Activated CD4-positive, alpha-beta memory T cell treated with anti-CD3 and anti-CD28 coated beads for 36 hours (primary cell): ENCODE measurements at regions of chr1 and their contacts with region 1.

Region 1: DNA sequence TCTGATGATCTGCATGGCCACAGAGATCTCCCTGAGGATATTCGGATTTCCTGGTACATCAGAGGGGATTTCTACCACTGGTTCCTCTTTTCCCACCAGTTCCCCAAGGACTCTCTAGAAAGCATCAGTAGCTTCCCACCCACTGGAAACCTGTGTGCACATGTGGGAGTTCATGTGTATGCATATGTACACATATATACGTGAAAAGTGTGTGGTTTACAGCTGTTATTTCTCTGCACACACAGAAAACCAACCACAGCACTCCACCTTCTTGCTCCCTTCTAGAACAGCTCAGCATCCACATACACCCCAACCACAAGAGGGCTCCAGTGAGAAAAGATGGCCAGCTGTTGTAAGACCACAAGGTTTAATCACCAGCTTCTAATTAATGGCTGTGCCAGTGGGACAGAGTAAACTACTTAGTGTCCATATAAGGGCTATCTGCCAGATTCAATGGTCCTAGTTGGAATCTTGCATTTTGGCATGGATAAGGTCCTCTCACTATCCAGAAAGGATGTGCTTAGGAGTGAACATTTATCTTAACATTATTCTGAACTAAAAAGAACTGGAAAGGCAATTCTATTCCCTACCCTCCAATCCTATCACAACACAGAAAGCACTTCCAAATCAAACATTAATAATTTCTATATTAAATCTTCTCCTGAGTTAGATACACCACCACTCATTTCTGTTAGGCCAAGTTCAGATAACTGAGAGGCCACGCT is 24.1 kb downstream of the GPR3 start:
- DNase-seq: peak; percentile 70
- H3K4me3 Mint-ChIP-seq: no peak overlapping the region
- H3K27ac Mint-ChIP-seq: no peak overlapping the region
- H3K4me1 Mint-ChIP-seq: peaks cover 39% of the 10 kb centered on the region
- H3K27me3 Mint-ChIP-seq: no peaks in the 10 kb centered on the region

Region 2: DNA sequence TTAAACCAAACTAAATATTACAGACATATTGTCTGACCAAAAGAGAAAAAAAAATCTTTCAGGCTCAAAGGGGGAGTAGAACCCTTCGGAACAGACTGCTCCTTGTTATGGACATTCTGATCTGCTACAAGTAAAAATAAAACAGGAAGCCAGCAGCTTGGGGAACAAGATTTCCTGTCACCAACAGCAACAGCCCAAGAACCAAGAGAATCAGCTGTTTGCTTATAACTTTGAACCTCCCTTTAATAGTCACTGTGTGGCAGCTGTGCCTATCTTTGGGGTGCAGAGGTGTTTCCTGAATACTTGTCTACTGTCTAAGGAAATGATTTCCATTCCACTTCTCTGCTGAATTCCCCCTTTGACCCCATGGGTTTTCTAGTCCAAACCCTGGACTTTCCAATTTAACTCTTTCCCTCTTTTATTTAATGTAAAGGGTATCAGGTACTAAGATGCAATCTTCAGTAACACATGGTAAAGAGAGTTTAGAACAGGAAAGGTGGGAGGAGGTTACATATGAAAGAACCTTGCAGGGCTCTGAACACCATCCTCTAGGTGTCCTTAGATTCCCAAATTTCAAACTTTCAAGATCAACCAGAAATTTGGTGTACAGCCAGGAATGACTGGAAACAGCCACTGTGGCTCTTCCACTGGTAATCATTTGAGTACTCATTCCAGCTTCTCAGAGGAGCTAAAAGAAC is 14.5 kb after region 1 on chr1:
- CTCF ChIA-PET with region 1: interaction called, 11 read pairs
- POLR2A ChIA-PET with region 1: interaction called, 4 read pairs
- intact Hi-C with region 1: no loop called
- DNase-seq: no peak
- H3K4me3 Mint-ChIP-seq: no peak overlapping the region
- H3K27ac Mint-ChIP-seq: peak overlapping the region; percentile 81
- H3K4me1 Mint-ChIP-seq: peaks cover 81% of the 10 kb centered on the region
- H3K27me3 Mint-ChIP-seq: no peaks in the 10 kb centered on the region

Region 3: GRCh38 chr1:27445177-27445936 is 28.8 kb after region 1 on chr1:
- CTCF ChIA-PET with region 1: interaction called, 26 read pairs
- POLR2A ChIA-PET with region 1: interaction called, 10 read pairs
- intact Hi-C with region 1: loop called (anchors 1 kb)
- DNase-seq: no peak
- H3K4me3 Mint-ChIP-seq: peak overlapping the region; percentile 52
- H3K27ac Mint-ChIP-seq: peak overlapping the region; percentile 88
- H3K4me1 Mint-ChIP-seq: peaks cover 54% of the 10 kb centered on the region
- H3K27me3 Mint-ChIP-seq: no peaks in the 10 kb centered on the region

Region 4: DNA sequence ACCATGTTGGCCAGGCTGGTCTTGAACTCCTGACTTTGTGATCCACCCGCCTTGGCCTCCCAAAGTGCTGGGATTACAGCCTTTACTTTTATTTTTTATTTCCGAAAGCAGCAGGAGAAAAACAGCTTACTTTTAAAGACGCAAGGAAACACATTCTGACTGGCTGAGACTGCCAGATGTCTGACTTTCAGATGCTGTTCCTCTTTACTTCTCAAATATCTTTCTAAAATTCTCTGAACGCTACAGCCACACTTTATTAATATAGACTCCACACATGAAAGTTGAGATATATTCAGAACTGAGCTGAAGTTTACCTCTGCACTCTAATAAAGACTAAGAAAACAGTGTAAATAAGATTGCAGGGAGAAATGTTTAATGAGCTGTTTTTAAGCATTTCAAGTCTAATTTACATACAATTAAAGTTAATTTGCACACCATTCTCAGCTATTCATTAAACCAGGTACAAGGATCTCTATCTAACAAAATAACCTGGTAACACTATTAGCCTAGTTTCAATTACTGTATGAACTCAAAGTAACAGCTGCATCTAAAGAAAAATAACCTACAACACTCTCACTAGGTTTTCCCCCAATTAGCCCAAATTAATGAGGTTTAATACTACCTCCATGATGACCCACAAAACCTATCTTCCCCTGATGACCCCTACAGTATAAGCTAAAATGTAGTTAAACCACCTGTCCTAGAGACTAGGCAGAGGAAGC is 48.5 kb after region 1 on chr1:
- CTCF ChIA-PET with region 1: interaction called, 10 read pairs
- POLR2A ChIA-PET with region 1: no interaction called
- intact Hi-C with region 1: no loop called
- DNase-seq: no peak
- H3K4me3 Mint-ChIP-seq: no peak overlapping the region
- H3K27ac Mint-ChIP-seq: no peak overlapping the region
- H3K4me1 Mint-ChIP-seq: peaks cover 45% of the 10 kb centered on the region
- H3K27me3 Mint-ChIP-seq: no peaks in the 10 kb centered on the region

Region 5: DNA sequence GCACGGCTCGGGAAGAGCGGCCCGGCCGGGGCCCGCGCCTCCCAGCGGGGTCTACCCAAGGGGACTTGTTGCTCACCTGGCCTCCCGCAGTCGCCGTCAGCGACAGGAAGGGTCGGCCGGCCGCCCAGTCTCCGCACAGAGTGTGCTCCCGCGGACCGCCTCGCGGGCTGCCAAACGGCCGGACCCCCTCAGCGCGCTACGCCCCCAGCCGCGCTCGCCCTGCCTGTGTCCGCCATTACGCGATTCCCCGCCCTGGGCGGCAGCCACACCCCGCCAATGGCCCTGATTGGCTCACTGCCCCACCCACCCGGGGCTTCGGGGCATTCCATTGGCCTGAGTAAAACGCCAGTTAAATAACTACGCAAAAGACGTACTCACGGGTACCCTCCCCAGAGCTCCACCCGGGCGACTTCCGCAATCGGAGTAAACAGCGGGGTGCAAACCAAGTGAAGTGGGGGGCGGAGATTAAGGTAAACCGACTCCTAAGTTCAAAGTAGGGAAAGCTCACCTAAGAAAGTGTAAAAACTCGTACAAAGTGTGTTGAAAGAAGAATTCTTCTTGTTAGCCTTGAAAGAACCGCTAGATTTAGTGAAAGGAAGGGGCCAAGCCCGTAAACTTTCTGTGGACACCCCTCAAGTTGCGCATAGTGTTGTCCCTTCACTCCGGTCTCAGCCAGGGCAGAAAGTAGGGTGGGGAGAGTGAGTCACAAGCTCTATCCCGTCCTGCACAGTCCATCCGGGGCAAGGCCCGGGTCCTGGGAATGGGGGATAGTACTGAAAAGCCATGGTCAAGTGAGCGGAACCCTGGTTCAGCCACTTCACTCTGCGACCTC is 73.6 kb after region 1 on chr1 and contains the start of gene WASF2:
- CTCF ChIA-PET with region 1: interaction called, 8 read pairs
- POLR2A ChIA-PET with region 1: interaction called, 6 read pairs
- intact Hi-C with region 1: loop called (anchors 1 kb)
- DNase-seq: peak; percentile 98
- H3K4me3 Mint-ChIP-seq: peak within 1 kb of the TSS; percentile 96
- H3K27ac Mint-ChIP-seq: peak within 1 kb of the TSS; percentile 99
- H3K4me1 Mint-ChIP-seq: peaks cover 28% of the 10 kb centered on the region
- H3K27me3 Mint-ChIP-seq: no peaks in the 10 kb centered on the region
- total RNA-seq, gene WASF2: 109 to 110 TPM

Region 6: DNA sequence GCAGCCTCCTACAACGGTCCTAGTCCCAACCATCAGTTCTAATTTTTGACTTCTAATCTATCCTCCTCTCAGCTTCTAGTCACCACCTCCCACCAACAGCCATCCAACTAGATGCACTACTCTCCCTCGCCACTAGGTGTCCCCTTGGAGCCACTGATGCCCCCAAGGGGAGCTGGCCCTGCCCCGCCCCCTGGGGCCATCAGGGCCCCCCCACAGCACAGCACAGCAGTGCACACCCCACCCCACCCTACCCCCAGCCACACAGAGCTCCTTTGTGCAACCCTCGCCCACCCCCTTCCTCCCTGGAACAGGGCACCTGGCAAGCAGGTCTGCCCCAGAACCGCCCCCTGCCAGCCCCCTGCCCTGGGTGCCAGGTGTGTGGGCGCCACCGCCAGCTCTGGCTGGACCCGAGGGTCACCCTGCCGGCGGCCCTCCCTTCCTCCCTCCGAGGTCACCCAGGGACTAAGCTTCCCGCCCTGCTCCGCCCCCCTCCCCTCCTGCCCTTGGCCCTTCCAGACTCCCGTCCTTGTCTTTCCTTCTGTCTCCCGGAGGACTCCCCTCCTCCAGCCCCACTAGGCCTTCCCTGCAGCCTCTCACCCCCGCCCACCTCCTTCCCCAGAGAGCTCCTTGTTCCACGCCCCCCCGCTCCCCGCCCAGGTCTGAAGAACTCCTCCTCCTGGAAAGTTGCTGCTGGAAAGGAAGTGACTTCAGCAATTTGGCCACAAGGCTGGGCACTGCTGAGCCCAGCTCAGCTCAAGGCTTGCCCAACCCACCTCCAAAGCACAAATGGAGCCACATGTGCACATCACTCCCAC is 140.4 kb after region 1 on chr1:
- CTCF ChIA-PET with region 1: interaction called, 12 read pairs
- POLR2A ChIA-PET with region 1: no interaction called
- intact Hi-C with region 1: no loop called
- DNase-seq: peak; percentile 81
- H3K4me3 Mint-ChIP-seq: no peak overlapping the region
- H3K27ac Mint-ChIP-seq: peak overlapping the region; percentile 49
- H3K4me1 Mint-ChIP-seq: peaks cover 17% of the 10 kb centered on the region
- H3K27me3 Mint-ChIP-seq: no peaks in the 10 kb centered on the region